ENCODE measurements at regions of chr10 and their contacts with region 1.

Region 1: DNA sequence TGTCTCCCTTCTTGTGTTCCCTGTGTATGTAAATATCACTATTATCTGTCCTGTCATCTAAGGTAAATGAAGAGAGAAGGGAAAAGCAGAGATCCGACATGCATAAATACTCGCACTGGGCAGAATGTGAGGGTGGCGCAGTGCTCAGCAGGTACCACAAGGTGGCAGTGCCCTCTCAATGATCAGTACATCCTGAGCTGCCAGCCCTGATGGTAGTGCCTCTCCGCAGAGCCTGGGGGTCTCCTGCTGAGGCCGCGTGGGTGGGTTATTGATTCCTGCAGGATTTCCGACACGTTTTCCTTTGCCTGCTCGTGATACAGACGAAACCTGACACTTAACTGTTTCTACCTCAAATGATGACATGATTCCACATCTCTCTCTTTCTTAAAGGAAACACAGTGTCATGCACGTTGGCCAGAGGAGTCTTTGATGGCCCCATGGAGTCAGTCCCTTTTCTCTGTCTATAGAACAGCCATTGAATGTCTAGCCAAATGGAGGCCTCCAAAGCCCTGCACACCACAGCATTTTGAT is 19.8 kb downstream of the RGR start:
- DNase-seq: peak; percentile 51 to 69 (median 68)
- ATAC-seq: peak; percentile 94 to 99 (median 96)
- H3K4me3 ChIP-seq: no peak overlapping the region
- H3K27ac ChIP-seq: no peak overlapping the region
- H3K4me1 ChIP-seq: no peaks in the 10 kb centered on the region
- H3K27me3 ChIP-seq: no peaks in the 10 kb centered on the region
- CTCF ChIP-seq: peak; percentile 82 to 93 (median 92)
- POLR2A ChIP-seq: no peak

Region 2: GRCh38 chr10:84139126-84140035 is 125.3 kb before region 1 on chr10 and contains the start of gene GHITM:
- intact Hi-C with region 1: no loop called
- DNase-seq: peak; percentile 98 to 99 (median 99)
- ATAC-seq: peak; percentile 97 to 99 (median 98)
- H3K4me3 ChIP-seq: peak within 1 kb of the TSS; percentile 96 to 100 (median 97)
- H3K27ac ChIP-seq: peak within 1 kb of the TSS; percentile 94 to 98 (median 97)
- H3K4me1 ChIP-seq: peaks cover 0 to 14% (median 6%) of the 10 kb centered on the region in 4 donors
- H3K27me3 ChIP-seq: no peaks in the 10 kb centered on the region
- CTCF ChIP-seq: peak; percentile 31 to 63 (median 35)
- POLR2A ChIP-seq: peak; percentile 94
- total RNA-seq, gene GHITM: 133 to 231 (median 166) TPM

Region 3: GRCh38 chr10:84172467-84173356 is 92.0 kb before region 1 on chr10:
- intact Hi-C with region 1: no loop called
- DNase-seq: no peak
- ATAC-seq: no peak
- H3K4me3 ChIP-seq: no peak overlapping the region
- H3K27ac ChIP-seq: no peak overlapping the region
- H3K4me1 ChIP-seq: no peaks in the 10 kb centered on the region
- H3K27me3 ChIP-seq: no peaks in the 10 kb centered on the region
- CTCF ChIP-seq: no peak
- POLR2A ChIP-seq: no peak

Region 4: DNA sequence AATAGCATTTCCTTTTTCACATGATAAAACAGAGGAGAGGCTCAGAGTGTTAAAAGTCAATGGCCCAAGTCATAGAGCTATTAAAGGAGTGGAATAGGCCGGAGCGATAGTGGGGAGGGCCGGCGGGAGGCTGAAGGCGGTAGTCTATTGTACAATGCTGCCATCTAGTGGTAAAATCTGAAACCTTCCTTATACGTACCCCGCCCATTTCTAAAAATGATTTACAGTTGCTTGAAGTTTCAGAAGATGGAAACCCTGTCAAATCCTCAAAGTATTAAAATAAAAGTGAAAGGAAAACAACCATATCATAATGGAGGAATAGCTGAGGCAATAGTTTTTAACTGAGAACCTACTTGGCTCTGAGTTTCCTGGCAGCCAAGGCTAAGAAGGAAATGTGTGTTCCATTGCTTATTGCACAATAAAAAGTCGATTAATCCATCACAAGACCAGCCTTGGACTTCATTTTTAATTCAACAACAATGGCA is 272.8 kb after region 1 on chr10:
- intact Hi-C with region 1: loop called (anchors 5 kb)
- DNase-seq: peak in 1 of 3 donors; percentile 49
- ATAC-seq: peak; percentile 84 to 90 (median 86)
- H3K4me3 ChIP-seq: no peak overlapping the region
- H3K27ac ChIP-seq: no peak overlapping the region
- H3K4me1 ChIP-seq: peaks cover 0 to 5% (median 0%) of the 10 kb centered on the region in 4 donors
- H3K27me3 ChIP-seq: no peaks in the 10 kb centered on the region
- CTCF ChIP-seq: peak; percentile 85 to 87 (median 86)
- POLR2A ChIP-seq: no peak